Psoas muscle (tissue), 8 donors: ENCODE measurements at regions of chr4 and their contacts with region 1.

Region 1: GRCh38 chr4:175891851-175892250 is 79.8 kb upstream of the GPM6A start:
- DNase-seq: no peak
- ATAC-seq: no peak
- H3K4me3 ChIP-seq: no peak overlapping the region
- H3K27ac ChIP-seq: no peak overlapping the region
- H3K4me1 ChIP-seq: no peaks in the 10 kb centered on the region
- H3K27me3 ChIP-seq: no peaks in the 10 kb centered on the region
- CTCF ChIP-seq: no peak

Region 2: DNA sequence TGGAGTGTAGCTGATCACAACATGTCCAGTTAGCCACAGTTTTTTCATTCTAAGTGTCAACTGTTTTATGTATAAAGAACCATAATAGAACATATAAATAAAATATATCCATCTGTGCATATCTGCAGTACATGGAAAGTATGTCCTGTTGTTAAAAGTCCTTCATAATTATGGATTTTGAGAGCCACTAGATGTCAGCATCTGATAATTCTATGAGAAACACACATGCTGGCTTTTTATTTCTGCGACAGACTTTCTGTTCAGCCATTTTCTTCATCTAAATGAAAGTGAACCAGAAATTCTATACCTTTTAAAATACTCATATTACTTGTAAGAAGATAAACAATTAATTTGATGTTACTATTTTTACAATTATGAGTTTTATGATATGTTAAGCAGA is 331.2 kb before region 1 on chr4:
- intact Hi-C with region 1: loop called in 1 of 2 experiments (anchors 5 kb)
- DNase-seq: no peak
- ATAC-seq: no peak
- H3K4me3 ChIP-seq: no peak overlapping the region
- H3K27ac ChIP-seq: no peak overlapping the region
- H3K4me1 ChIP-seq: no peaks in the 10 kb centered on the region
- H3K27me3 ChIP-seq: no peaks in the 10 kb centered on the region
- CTCF ChIP-seq: peak; percentile 29

Region 3: GRCh38 chr4:175906381-175906780 is 14.5 kb after region 1 on chr4:
- intact Hi-C with region 1: no loop called
- DNase-seq: no peak
- ATAC-seq: no peak
- H3K4me3 ChIP-seq: no peak overlapping the region
- H3K27ac ChIP-seq: no peak overlapping the region
- H3K4me1 ChIP-seq: no peaks in the 10 kb centered on the region
- H3K27me3 ChIP-seq: no peaks in the 10 kb centered on the region
- CTCF ChIP-seq: no peak